ENCODE measurements at regions of chr1 and their contacts with region 1.

Region 1: DNA sequence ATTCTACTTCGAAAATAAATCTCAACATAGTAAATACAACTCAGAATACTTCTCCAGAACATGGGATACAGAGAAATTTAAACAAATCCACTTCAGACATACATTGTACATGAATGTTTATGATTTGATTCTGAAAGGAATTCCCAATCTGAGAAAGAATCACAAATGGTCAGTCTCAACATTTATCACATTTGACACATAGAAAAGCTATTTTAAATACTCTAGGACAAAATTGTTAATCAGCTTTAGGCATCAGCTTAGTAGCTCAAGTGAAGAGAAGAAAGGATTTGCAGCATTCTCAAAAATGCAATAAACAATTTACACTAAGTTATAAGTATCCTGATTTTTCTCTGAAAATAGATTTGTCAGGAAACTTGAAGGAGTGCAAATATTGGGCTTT is 184.8 kb downstream of the PTPRC start:
- DNase-seq: no peak
- ATAC-seq: no peak
- H3K4me3 ChIP-seq: no peak overlapping the region
- H3K27ac ChIP-seq: no peak overlapping the region
- H3K4me1 ChIP-seq: no peaks in the 10 kb centered on the region
- H3K27me3 ChIP-seq: no peaks in the 10 kb centered on the region
- CTCF ChIP-seq: no peak
- EP300 ChIP-seq: no peak
- POLR2A ChIP-seq: no peak
- RAD21 ChIP-seq: no peak

Region 2: DNA sequence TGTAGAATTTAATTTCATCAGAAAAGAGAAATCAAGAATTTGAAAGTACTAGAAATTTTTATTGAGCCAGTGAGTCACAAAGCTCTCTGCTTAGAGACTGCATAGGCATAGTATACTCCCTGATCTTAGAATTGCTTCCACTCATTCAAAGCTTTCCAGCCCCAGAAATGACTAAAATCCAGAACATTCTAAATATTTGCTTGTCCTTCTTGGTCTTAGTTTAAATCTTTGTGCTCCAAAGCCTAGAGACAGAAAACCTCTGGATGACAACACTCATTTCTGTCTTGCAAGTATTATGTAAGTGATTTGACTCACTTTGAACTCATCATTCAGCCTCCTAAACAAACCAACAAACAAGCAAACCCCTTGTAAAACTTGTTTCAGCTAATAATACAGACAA is 110.5 kb before region 1 on chr1:
- CTCF ChIA-PET with region 1: no interaction called
- POLR2A ChIA-PET with region 1: no interaction called
- RAD21 ChIA-PET with region 1: no interaction called
- SMC1A ChIA-PET with region 1: no interaction called
- in situ Hi-C with region 1: no loop called
- intact Hi-C with region 1: no loop called
- DNase-seq: no peak
- ATAC-seq: peak; percentile 21; the same call in 2 of the 3 replicates
- H3K4me3 ChIP-seq: no peak overlapping the region
- H3K27ac ChIP-seq: no peak overlapping the region
- H3K4me1 ChIP-seq: no peaks in the 10 kb centered on the region
- H3K27me3 ChIP-seq: no peaks in the 10 kb centered on the region
- CTCF ChIP-seq: no peak
- EP300 ChIP-seq: no peak
- POLR2A ChIP-seq: no peak
- RAD21 ChIP-seq: no peak

Region 3: GRCh38 chr1:198837278-198838021 is 13.8 kb after region 1 on chr1:
- CTCF ChIA-PET with region 1: interaction called, 8 read pairs
- POLR2A ChIA-PET with region 1: no interaction called
- RAD21 ChIA-PET with region 1: interaction called, 3 read pairs
- SMC1A ChIA-PET with region 1: interaction called, 7 read pairs
- in situ Hi-C with region 1: no loop called
- intact Hi-C with region 1: loop called (anchors 2 kb)
- DNase-seq: no peak
- ATAC-seq: peak; percentile 58
- H3K4me3 ChIP-seq: no peak overlapping the region
- H3K27ac ChIP-seq: no peak overlapping the region
- H3K4me1 ChIP-seq: no peaks in the 10 kb centered on the region
- H3K27me3 ChIP-seq: no peaks in the 10 kb centered on the region
- CTCF ChIP-seq: no peak
- EP300 ChIP-seq: no peak
- POLR2A ChIP-seq: no peak
- RAD21 ChIP-seq: no peak